B cell (primary cell): ENCODE measurements at regions of chr10 and their contacts with region 1.

Region 1: GRCh38 chr10:72625608-72626443 is at the start of gene MICU1:
- DNase-seq: peak; percentile 95
- ATAC-seq: peak; percentile 99
- H3K4me3 ChIP-seq: peak within 1 kb of the TSS; percentile 72 to 99 (median 89)
- H3K4me3 Mint-ChIP-seq: peak within 1 kb of the TSS; percentile 99
- H3K27ac ChIP-seq: peak within 1 kb of the TSS; percentile 52 to 81
- H3K27ac Mint-ChIP-seq: peak within 1 kb of the TSS; percentile 92
- H3K4me1 ChIP-seq: peaks cover 8 to 9% of the 10 kb centered on the region in 2 donors
- H3K4me1 Mint-ChIP-seq: peaks cover 13% of the 10 kb centered on the region
- H3K27me3 ChIP-seq: no peaks in the 10 kb centered on the region
- H3K27me3 Mint-ChIP-seq: no peaks in the 10 kb centered on the region
- CTCF ChIP-seq: no peak
- total RNA-seq, gene MICU1: 34.7 and 42.9 TPM in 2 replicates

Region 2: GRCh38 chr10:72472306-72472705 is 153.5 kb before region 1 on chr10:
- CTCF ChIA-PET with region 1: no interaction called
- POLR2A ChIA-PET with region 1: no interaction called
- intact Hi-C with region 1: no loop called
- DNase-seq: no peak
- ATAC-seq: no peak
- H3K4me3 ChIP-seq: no peak overlapping the region
- H3K4me3 Mint-ChIP-seq: no peak overlapping the region
- H3K27ac ChIP-seq: no peak overlapping the region
- H3K27ac Mint-ChIP-seq: no peak overlapping the region
- H3K4me1 ChIP-seq: no peaks in the 10 kb centered on the region
- H3K4me1 Mint-ChIP-seq: no peaks in the 10 kb centered on the region
- H3K27me3 ChIP-seq: no peaks in the 10 kb centered on the region
- H3K27me3 Mint-ChIP-seq: no peaks in the 10 kb centered on the region
- CTCF ChIP-seq: no peak

Region 3: GRCh38 chr10:72567884-72568640 is 57.8 kb before region 1 on chr10:
- CTCF ChIA-PET with region 1: no interaction called
- POLR2A ChIA-PET with region 1: no interaction called
- intact Hi-C with region 1: loop called (anchors 1 kb)
- DNase-seq: peak; percentile 20
- ATAC-seq: no peak
- H3K4me3 ChIP-seq: no peak overlapping the region
- H3K4me3 Mint-ChIP-seq: no peak overlapping the region
- H3K27ac ChIP-seq: no peak overlapping the region
- H3K27ac Mint-ChIP-seq: no peak overlapping the region
- H3K4me1 ChIP-seq: peaks cover 7% of the 10 kb centered on the region in 2 donors
- H3K4me1 Mint-ChIP-seq: peaks cover 12% of the 10 kb centered on the region
- H3K27me3 ChIP-seq: no peaks in the 10 kb centered on the region
- H3K27me3 Mint-ChIP-seq: no peaks in the 10 kb centered on the region
- CTCF ChIP-seq: peak; percentile 60

Region 4: DNA sequence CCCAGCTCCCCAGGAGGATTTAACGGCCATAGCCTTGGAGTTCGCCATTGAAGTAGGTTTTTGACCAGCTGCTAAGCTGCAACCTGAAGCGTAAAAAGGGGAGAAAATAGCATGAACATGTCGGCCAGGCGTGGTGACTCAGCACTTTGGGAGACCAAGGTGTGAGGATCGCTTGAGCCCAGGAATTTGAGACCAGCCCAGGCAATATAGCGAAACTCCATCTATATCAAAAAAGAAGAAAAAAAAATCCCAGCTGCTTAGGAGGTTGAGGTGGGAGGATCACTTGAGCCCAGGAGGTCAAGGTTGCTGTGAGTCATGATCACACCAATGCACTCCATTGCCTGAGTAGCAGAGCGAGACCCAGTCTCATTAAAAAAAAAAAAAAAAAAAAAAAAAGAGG is 33.9 kb after region 1 on chr10:
- CTCF ChIA-PET with region 1: no interaction called
- POLR2A ChIA-PET with region 1: no interaction called
- intact Hi-C with region 1: no loop called
- DNase-seq: no peak
- ATAC-seq: no peak
- H3K4me3 ChIP-seq: no peak overlapping the region
- H3K4me3 Mint-ChIP-seq: no peak overlapping the region
- H3K27ac ChIP-seq: no peak overlapping the region
- H3K27ac Mint-ChIP-seq: no peak overlapping the region
- H3K4me1 ChIP-seq: no peaks in the 10 kb centered on the region
- H3K4me1 Mint-ChIP-seq: no peaks in the 10 kb centered on the region
- H3K27me3 ChIP-seq: no peaks in the 10 kb centered on the region
- H3K27me3 Mint-ChIP-seq: peaks cover 3% of the 10 kb centered on the region
- CTCF ChIP-seq: no peak

Region 5: DNA sequence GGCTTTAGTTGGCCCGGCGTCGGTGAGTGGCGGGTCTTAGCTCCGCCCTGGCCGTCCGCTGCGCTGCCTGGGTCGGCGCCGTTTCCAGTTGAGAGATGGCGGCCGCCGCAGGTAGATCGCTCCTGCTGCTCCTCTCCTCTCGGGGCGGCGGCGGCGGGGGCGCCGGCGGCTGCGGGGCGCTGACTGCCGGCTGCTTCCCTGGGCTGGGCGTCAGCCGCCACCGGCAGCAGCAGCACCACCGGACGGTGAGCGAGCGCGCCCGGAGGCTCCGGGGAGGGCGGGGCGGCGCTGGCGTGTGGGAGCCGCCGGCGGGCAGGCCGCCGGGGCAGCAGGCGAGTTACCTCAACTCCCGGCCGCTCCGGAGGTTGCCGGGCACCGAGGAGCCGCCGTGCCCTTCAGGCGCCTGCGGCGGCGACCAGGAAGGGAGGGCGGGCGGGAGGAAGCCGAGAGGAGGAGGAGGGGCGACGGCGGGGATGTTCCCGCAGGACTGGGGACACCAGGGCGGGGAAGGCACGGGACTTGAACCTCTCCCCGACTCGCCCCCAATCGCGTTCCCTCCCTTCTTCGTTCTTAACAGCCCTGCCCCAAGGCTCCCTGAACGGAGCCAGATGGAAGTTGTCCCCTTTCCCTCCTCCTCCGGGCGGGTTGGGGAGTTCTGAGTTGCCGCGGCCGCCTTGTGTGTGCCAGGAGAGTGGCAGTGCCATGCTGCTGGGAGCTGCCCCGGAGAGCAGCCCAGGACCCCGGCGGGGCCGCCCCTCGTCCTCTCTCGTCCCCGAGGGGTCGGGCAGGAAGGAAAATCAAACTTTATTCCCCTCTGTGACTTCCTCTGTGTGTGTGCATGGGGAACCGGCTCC is 66.5 kb after region 1 on chr10 and contains the start of gene MCU:
- CTCF ChIA-PET with region 1: no interaction called
- POLR2A ChIA-PET with region 1: no interaction called
- intact Hi-C with region 1: loop called (anchors 1 kb)
- DNase-seq: peak; percentile 94
- ATAC-seq: peak; percentile 95
- H3K4me3 ChIP-seq: peak within 1 kb of the TSS; percentile 64 to 91 (median 79)
- H3K4me3 Mint-ChIP-seq: peak within 1 kb of the TSS; percentile 95
- H3K27ac ChIP-seq: peak within 1 kb of the TSS; percentile 58 to 72
- H3K27ac Mint-ChIP-seq: peak within 1 kb of the TSS; percentile 91
- H3K4me1 ChIP-seq: peaks cover 28 to 33% of the 10 kb centered on the region in 2 donors
- H3K4me1 Mint-ChIP-seq: peaks cover 43% of the 10 kb centered on the region
- H3K27me3 ChIP-seq: no peaks in the 10 kb centered on the region
- H3K27me3 Mint-ChIP-seq: no peaks in the 10 kb centered on the region
- CTCF ChIP-seq: no peak
- total RNA-seq, gene MCU: 17.6 and 21.1 TPM in 2 replicates